PC-9 (cell line): ENCODE measurements at regions of chr4 and their contacts with region 1.

Region 1: DNA sequence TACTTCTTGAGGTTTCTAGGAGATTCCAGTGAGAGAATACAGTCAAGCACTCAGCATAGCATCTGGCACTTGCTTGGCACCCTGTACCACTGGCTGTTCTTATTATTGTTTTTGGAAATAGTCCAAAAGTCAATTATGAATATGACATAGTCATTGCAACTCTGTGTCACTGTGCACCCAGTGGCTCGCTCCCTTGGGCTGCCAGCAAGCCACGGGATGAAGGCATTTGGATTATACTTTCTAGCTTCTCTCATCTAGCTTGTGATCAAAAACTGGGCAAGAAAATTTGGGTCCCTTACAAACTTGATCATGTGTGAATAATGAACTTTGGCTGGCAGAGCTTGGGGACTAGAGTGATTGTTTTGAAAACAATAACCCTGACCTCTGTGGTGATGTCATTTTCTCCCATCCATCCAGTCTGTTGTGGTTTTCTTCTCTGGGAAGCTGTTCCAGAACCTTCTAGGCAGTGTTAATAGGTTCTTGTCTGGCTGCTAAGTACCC is 32.7 kb upstream of the LIMCH1 start:
- DNase-seq: peak in 1 of 2 experiments; percentile 31
- H3K4me3 ChIP-seq: no peak overlapping the region
- H3K27ac ChIP-seq: no peak overlapping the region
- H3K4me1 ChIP-seq: no peaks in the 10 kb centered on the region; the same call in 1 of the 2 replicates
- H3K27me3 ChIP-seq: no peaks in the 10 kb centered on the region
- CTCF ChIP-seq: no peak

Region 2: GRCh38 chr4:41281038-41281634 is 224.1 kb before region 1 on chr4:
- CTCF ChIA-PET with region 1: no interaction called
- POLR2A ChIA-PET with region 1: no interaction called
- intact Hi-C with region 1: loop called (anchors 10 kb)
- DNase-seq: peak; percentile 48 to 72
- H3K4me3 ChIP-seq: no peak overlapping the region
- H3K27ac ChIP-seq: no peak overlapping the region
- H3K4me1 ChIP-seq: peaks cover 23% of the 10 kb centered on the region
- H3K27me3 ChIP-seq: no peaks in the 10 kb centered on the region
- CTCF ChIP-seq: peak; percentile 91

Region 3: GRCh38 chr4:41432881-41433280 is 72.3 kb before region 1 on chr4:
- CTCF ChIA-PET with region 1: interaction called, 4 read pairs
- POLR2A ChIA-PET with region 1: no interaction called
- intact Hi-C with region 1: loop called (anchors 5 kb)
- DNase-seq: peak; percentile 21 to 94
- H3K4me3 ChIP-seq: no peak overlapping the region
- H3K27ac ChIP-seq: peak overlapping the region; percentile 85
- H3K4me1 ChIP-seq: peaks cover 56% of the 10 kb centered on the region
- H3K27me3 ChIP-seq: no peaks in the 10 kb centered on the region
- CTCF ChIP-seq: no peak

Region 4: GRCh38 chr4:41475402-41475801 is 29.8 kb before region 1 on chr4:
- CTCF ChIA-PET with region 1: no interaction called
- POLR2A ChIA-PET with region 1: no interaction called
- intact Hi-C with region 1: loop called (anchors 1 kb)
- DNase-seq: peak; percentile 68 to 94
- H3K4me3 ChIP-seq: no peak overlapping the region
- H3K27ac ChIP-seq: peak overlapping the region; percentile 84
- H3K4me1 ChIP-seq: peaks cover 26% of the 10 kb centered on the region
- H3K27me3 ChIP-seq: no peaks in the 10 kb centered on the region
- CTCF ChIP-seq: no peak

Region 5: GRCh38 chr4:41538017-41538733 is 33.0 kb after region 1 on chr4 and contains the start of gene LIMCH1:
- CTCF ChIA-PET with region 1: no interaction called
- POLR2A ChIA-PET with region 1: interaction called, 3 read pairs
- intact Hi-C with region 1: loop called (anchors 1 kb)
- DNase-seq: peak in 1 of 2 experiments; percentile 65
- H3K4me3 ChIP-seq: peak within 1 kb of the TSS; percentile 44
- H3K27ac ChIP-seq: peak within 1 kb of the TSS; percentile 96
- H3K4me1 ChIP-seq: peaks cover 65% of the 10 kb centered on the region
- H3K27me3 ChIP-seq: no peaks in the 10 kb centered on the region
- CTCF ChIP-seq: no peak
- total RNA-seq, gene LIMCH1: 252 and 339 TPM in 2 replicates

Region 6: DNA sequence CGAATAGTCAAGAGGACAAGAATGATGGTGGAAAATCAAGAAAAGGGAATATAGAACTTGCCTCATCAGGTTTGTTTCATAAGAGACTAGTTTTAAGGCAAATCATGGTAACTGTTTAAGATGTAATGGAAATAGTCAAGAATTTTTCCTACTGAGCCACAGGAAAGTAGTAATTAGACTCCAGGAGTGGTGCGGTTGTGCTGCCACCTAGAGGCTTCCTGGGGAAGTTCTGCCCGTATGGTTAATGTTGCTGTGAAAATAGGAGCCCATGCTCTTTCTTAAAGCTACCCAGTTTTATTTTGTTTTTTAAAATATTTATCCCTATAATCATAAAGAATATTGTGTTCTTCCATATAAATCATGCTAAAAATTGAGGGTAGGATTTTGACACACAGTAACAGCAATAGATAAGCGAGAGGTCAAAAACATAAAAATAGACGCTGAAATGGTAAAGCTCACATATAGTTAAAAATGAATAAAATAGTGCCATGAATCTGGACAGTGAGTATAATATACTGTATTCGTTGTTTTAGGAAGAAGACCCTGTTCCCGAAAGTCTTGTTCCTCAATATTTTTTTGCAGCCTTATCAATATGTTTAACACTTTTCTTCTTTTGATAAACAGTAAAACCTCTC is 156.3 kb after region 1 on chr4:
- CTCF ChIA-PET with region 1: no interaction called
- POLR2A ChIA-PET with region 1: no interaction called
- intact Hi-C with region 1: loop called (anchors 1 kb)
- DNase-seq: peak in 1 of 2 experiments; percentile 63
- H3K4me3 ChIP-seq: no peak overlapping the region
- H3K27ac ChIP-seq: peak overlapping the region; percentile 31
- H3K4me1 ChIP-seq: peaks cover 25% of the 10 kb centered on the region
- H3K27me3 ChIP-seq: no peaks in the 10 kb centered on the region
- CTCF ChIP-seq: peak; percentile 92